B cell (primary cell): ENCODE measurements at regions of chr1 and their contacts with region 1.

Region 1: GRCh38 chr1:116498789-116499628 is 71.8 kb downstream of the CD58 start:
- DNase-seq: peak; percentile 65
- ATAC-seq: peak; percentile 76
- H3K4me3 ChIP-seq: no peak overlapping the region
- H3K4me3 Mint-ChIP-seq: no peak overlapping the region
- H3K27ac ChIP-seq: no peak overlapping the region
- H3K27ac Mint-ChIP-seq: no peak overlapping the region
- H3K4me1 ChIP-seq: peaks cover 14 to 16% of the 10 kb centered on the region in 2 donors
- H3K4me1 Mint-ChIP-seq: peaks cover 23% of the 10 kb centered on the region
- H3K27me3 ChIP-seq: no peaks in the 10 kb centered on the region
- H3K27me3 Mint-ChIP-seq: no peaks in the 10 kb centered on the region
- CTCF ChIP-seq: peak; percentile 80

Region 2: DNA sequence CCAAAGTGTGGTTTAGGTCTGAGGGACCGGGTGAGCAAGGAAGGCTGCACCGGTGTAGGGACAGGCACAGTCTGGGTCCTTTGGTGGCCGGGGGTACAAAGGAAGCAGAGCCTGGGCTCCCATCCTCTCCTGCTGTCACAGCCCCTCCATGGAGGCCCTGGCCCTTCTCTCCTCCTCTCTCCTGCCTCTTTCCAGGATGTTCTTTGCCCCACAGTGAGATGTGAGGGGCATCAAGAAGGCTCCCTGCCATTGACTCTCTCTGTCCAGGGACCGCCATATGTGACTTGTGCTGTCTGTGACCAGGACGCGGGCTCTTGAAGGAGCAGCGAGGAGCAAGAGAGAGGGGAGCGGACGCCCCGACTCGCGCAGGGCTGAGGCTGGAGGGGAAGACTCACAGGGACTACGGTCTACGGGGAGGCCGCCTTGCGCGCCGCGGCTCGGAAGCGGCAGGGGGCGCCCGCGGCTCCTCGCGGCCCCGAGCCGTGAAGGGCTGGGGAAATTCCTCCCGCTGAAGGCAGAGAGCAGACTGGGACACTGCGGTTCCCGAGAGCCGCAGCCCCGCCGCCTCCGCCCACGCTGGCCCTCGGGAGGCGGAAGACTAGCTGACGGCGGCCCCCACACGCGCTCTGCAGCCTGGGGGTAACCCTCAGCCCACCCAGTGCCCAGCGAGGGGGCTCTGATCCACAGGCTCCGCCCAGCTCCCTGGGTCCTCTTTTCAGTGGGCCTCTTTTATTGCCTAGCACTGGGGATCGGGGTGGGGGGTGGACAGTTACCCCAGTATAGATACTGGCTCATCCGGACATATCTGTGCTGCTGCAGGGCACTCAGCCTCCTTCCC is 347.1 kb before region 1 on chr1:
- CTCF ChIA-PET with region 1: interaction called, 578 read pairs
- POLR2A ChIA-PET with region 1: no interaction called
- intact Hi-C with region 1: loop called (anchors 1 kb)
- DNase-seq: peak; percentile 86
- ATAC-seq: peak; percentile 98
- H3K4me3 ChIP-seq: peak overlapping the region in 4 of 5 experiments; percentile 17 to 44 (median 41)
- H3K4me3 Mint-ChIP-seq: peak overlapping the region; percentile 65
- H3K27ac ChIP-seq: no peak overlapping the region
- H3K27ac Mint-ChIP-seq: no peak overlapping the region
- H3K4me1 ChIP-seq: peaks cover 7 to 11% of the 10 kb centered on the region in 2 donors
- H3K4me1 Mint-ChIP-seq: peaks cover 8% of the 10 kb centered on the region
- H3K27me3 ChIP-seq: no peaks in the 10 kb centered on the region
- H3K27me3 Mint-ChIP-seq: peaks cover 15% of the 10 kb centered on the region
- CTCF ChIP-seq: peak; percentile 90

Region 3: DNA sequence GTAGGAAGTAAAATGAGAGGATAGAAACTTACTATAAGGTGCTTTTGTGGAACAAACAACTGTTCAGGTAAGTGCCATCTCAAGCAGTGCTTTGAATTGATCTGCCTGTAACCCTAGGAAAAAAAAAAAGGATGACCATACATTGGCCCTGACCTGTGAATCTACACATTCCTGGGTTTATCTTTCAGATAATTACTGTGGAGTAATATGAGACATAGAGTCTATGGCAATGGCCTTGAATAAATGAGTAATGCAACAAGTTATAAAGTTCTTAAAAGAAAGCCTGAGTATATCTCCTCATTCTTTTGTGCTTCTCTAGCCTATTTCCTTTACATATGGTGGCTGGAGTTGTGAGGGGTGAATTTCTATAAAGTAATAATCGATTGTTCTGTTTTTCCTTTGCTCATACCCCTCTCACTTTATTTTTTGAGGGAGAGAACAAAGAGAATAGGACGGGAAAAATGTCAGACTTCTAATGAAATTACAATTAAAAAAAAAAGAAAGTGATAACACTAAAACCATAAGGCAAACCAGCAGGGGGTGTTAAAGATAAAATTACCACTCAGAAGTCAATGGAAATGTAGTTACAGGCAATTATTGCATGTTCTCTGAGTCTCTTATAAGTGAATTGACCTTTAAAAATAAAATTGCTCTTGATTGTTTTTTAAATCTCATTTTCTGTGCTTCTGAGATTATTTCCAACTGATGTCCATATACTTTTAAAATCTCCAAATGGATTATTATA is 138.4 kb before region 1 on chr1:
- CTCF ChIA-PET with region 1: interaction called, 13 read pairs
- POLR2A ChIA-PET with region 1: no interaction called
- intact Hi-C with region 1: no loop called
- DNase-seq: no peak
- ATAC-seq: no peak
- H3K4me3 ChIP-seq: no peak overlapping the region
- H3K4me3 Mint-ChIP-seq: no peak overlapping the region
- H3K27ac ChIP-seq: no peak overlapping the region
- H3K27ac Mint-ChIP-seq: no peak overlapping the region
- H3K4me1 ChIP-seq: no peaks in the 10 kb centered on the region
- H3K4me1 Mint-ChIP-seq: peaks cover 2% of the 10 kb centered on the region
- H3K27me3 ChIP-seq: peaks cover 0 to 3% (median 0%) of the 10 kb centered on the region in 4 experiments
- H3K27me3 Mint-ChIP-seq: peaks cover 25% of the 10 kb centered on the region
- CTCF ChIP-seq: peak; percentile 38

Region 4: DNA sequence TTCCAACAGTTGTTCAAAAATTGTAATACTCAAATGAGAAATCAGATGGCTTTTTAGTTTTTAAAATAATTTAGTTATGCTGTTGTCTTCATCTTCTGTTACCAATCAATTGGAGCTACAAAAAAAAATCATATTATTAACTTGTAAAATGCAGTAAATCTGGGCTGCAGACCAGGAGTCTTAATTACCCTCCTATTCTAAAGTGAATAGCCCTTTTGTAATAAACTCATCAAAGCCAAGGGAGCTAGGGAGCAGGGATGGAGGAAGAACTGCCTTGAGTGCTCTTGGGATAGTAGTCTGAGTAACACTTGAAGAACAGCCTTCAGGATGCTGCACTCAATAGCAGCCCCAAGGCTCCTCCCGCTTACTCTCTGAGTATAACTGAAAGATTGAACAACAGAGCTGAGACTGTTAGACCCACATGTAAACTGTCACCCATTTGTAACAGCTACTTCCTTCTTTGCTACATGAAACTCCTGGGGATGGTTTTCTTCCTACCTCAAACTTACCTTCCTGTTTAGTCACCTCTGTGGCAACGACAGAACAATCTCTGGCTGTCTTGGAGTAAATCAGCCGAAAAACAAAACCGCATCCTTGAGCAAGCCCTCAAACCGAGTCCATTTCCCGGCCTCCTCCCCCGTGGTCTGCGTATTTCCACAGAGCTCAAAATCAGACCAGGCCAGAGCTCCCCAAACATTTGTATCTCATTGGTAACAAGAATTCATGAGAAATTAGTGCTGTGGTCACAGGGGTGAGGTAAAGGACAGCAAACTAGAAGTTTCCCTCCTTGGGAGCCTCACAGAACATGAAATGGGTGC is 15.9 kb after region 1 on chr1:
- CTCF ChIA-PET with region 1: interaction called, 25 read pairs
- POLR2A ChIA-PET with region 1: no interaction called
- intact Hi-C with region 1: loop called (anchors 1 kb)
- DNase-seq: peak; percentile 67
- ATAC-seq: peak; percentile 71
- H3K4me3 ChIP-seq: peak overlapping the region in 3 of 5 experiments; percentile 1 to 47 (median 9)
- H3K4me3 Mint-ChIP-seq: peak overlapping the region; percentile 83
- H3K27ac ChIP-seq: peak overlapping the region; percentile 72 to 86
- H3K27ac Mint-ChIP-seq: peak overlapping the region; percentile 96
- H3K4me1 ChIP-seq: peaks cover 20 to 26% of the 10 kb centered on the region in 2 donors
- H3K4me1 Mint-ChIP-seq: peaks cover 47% of the 10 kb centered on the region
- H3K27me3 ChIP-seq: no peaks in the 10 kb centered on the region
- H3K27me3 Mint-ChIP-seq: no peaks in the 10 kb centered on the region
- CTCF ChIP-seq: no peak